Heart left ventricle (tissue), 16 donors: ENCODE measurements at regions of chr10 and their contacts with region 1.

Region 1: GRCh38 chr10:47165711-47166524 is 134.1 kb upstream of the GDF10 start:
- DNase-seq: peak; percentile 40 to 81 (median 60)
- ATAC-seq: peak; percentile 54 to 87 (median 77)
- H3K4me3 ChIP-seq: peak overlapping the region in 9 of 12 donors; percentile 21 to 47 (median 32)
- H3K27ac ChIP-seq: peak overlapping the region in 8 of 12 donors; percentile 19 to 86 (median 38)
- H3K4me1 ChIP-seq: peaks cover 0 to 33% (median 0%) of the 10 kb centered on the region in 12 donors
- H3K27me3 ChIP-seq: peaks cover 0 to 8% (median 0%) of the 10 kb centered on the region in 9 donors
- CTCF ChIP-seq: peak in 1 of 12 donors; percentile 13
- POLR2A ChIP-seq: no peak

Region 2: DNA sequence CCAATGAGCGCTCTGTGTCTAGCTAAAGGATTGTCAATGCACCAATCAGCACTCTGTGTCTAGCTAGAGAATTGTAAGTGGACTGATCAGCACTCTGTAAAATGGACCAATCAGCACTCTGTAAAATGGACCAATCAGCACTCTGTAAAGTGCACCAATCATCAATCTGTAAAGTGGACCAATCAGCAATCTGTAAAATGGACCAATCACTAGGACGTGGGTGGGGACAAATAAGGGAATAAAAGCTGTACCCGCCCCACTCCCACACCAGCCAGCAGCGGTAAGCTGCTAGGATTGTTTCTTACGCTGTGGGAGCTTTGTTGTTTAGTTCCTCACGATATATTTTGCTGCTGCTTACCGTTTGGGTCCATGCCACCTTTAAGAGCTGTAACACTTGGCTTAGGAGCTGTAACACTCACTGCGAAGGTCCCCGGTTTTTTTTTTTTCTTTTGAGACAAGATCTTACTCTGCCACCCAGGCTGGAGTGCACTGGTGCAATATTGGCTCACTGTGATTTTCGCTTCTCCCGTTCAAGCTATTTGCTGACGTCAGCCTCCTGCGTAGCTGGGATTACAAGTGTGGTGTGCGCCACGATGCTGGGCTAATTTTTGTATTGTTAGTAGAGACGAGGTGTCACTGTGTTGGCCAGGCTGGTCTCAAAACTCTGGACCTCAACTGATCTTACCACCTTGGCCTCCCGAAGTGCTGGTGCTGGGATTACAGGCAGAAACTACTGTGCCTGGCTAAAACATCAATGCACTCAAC is 69.9 kb before region 1 on chr10:
- intact Hi-C with region 1: loop called in 1 of 10 experiments (anchors 5 kb)
- DNase-seq: no peak
- ATAC-seq: no peak
- H3K4me3 ChIP-seq: no peak overlapping the region
- H3K27ac ChIP-seq: no peak overlapping the region
- H3K4me1 ChIP-seq: no peaks in the 10 kb centered on the region
- H3K27me3 ChIP-seq: no peaks in the 10 kb centered on the region
- CTCF ChIP-seq: no peak
- POLR2A ChIP-seq: no peak

Region 3: GRCh38 chr10:47243791-47244190 is 77.9 kb after region 1 on chr10:
- intact Hi-C with region 1: no loop called
- DNase-seq: peak in 1 of 5 donors; percentile 34
- ATAC-seq: no peak
- H3K4me3 ChIP-seq: no peak overlapping the region
- H3K27ac ChIP-seq: no peak overlapping the region
- H3K4me1 ChIP-seq: peaks cover 0 to 3% (median 0%) of the 10 kb centered on the region in 12 donors
- H3K27me3 ChIP-seq: peaks cover 0 to 10% (median 0%) of the 10 kb centered on the region in 9 donors
- CTCF ChIP-seq: no peak
- POLR2A ChIP-seq: no peak

Region 4: DNA sequence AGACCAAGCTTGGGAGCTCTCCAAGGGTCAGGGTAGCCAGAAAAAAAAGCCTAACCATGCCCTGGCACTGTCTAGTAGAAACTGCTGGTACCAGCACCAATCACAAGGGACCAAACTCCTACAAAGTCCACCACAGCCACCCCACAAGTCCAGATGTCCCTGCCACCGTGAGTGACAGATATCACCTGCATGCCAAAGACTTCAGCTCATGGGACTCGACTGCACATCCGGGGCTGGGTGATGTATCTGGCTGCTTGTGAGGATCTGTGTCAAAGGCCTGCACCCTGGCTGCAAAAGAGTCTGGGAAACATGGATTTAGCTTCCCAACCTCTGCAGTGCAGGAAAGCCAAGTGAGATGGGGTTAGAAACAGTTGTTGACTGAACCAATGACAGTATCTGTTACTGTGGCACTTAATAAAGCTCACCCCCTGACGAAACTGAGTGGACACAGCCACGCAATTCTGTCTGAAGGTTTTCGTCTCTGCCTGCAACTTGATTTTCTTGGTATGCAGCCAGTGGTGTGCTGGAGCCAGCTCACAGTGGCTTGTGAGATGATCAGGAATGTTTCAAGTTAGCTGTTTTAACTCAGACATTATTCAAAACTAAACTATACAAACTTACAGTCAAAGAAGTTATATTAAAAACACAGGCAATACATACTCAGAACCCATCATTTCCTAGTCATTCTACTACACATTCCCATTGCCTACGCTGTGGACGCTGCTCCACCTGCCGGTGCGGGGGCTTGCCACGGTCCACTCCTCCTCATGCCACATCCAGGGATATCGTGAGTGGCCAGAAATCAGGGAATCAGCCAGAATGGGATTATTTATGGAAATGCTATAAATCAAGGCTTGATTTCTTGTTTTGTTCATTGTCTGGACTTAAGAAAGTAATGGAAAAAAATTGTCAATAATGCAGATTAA is 209.0 kb after region 1 on chr10:
- intact Hi-C with region 1: no loop called
- DNase-seq: peak in 1 of 5 donors; percentile 18
- ATAC-seq: no peak
- H3K4me3 ChIP-seq: no peak overlapping the region
- H3K27ac ChIP-seq: no peak overlapping the region
- H3K4me1 ChIP-seq: peaks cover 0 to 7% (median 0%) of the 10 kb centered on the region in 12 donors
- H3K27me3 ChIP-seq: peaks cover 0 to 13% (median 0%) of the 10 kb centered on the region in 9 donors
- CTCF ChIP-seq: no peak
- POLR2A ChIP-seq: no peak